ENCODE measurements at regions of chr19 and their contacts with region 1.

Region 1: GRCh38 chr19:17390665-17391370 is 3.2 kb downstream of the CCDC194 start:
- DNase-seq: peak; percentile 81 to 88 (median 86)
- H3K4me3 ChIP-seq: peak overlapping the region; percentile 64
- H3K4me3 Mint-ChIP-seq: peak overlapping the region; percentile 76 to 94 (median 89)
- H3K27ac ChIP-seq: no peak overlapping the region
- H3K27ac Mint-ChIP-seq: peak overlapping the region in 3 of 8 donors; percentile 48 to 86 (median 61)
- H3K4me1 ChIP-seq: peaks cover 20% of the 10 kb centered on the region
- H3K4me1 Mint-ChIP-seq: peaks cover 15 to 29% (median 20%) of the 10 kb centered on the region in 3 donors
- H3K27me3 ChIP-seq: no peaks in the 10 kb centered on the region
- H3K27me3 Mint-ChIP-seq: peaks cover 0 to 2% of the 10 kb centered on the region in 2 donors

Region 2: DNA sequence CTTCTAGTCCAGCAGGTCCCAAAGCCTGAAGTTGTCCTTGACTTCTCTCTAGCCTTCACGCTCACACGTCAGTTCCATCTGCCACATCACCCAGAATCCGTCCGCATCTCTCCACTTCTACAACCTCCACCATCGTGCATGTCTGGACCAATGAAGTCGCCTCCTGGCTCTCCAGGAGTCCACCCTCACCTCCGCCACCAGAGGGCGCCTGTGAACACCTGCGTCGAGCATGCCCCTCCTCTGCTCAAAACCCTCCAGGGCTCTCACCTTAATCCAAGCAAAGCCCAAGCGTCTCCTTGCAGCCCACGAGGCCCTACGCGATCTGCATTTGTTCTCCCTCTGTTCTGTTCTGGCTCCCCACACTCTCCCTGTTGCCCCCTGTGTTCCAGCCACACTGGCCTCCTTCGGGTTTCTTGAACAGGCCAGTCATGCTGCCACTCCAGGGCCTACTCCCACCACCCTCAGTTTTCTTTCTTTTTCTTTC is 129.9 kb before region 1 on chr19:
- CTCF ChIA-PET with region 1: interaction called, 10 read pairs
- POLR2A ChIA-PET with region 1: no interaction called
- DNase-seq: peak; percentile 80 to 92 (median 82)
- H3K4me3 ChIP-seq: no peak overlapping the region
- H3K4me3 Mint-ChIP-seq: no peak overlapping the region
- H3K27ac ChIP-seq: no peak overlapping the region
- H3K27ac Mint-ChIP-seq: peak overlapping the region in 4 of 8 donors; percentile 0 to 43 (median 3)
- H3K4me1 ChIP-seq: peaks cover 7% of the 10 kb centered on the region
- H3K4me1 Mint-ChIP-seq: peaks cover 7 to 13% (median 8%) of the 10 kb centered on the region in 3 donors
- H3K27me3 ChIP-seq: no peaks in the 10 kb centered on the region
- H3K27me3 Mint-ChIP-seq: no peaks in the 10 kb centered on the region

Region 3: DNA sequence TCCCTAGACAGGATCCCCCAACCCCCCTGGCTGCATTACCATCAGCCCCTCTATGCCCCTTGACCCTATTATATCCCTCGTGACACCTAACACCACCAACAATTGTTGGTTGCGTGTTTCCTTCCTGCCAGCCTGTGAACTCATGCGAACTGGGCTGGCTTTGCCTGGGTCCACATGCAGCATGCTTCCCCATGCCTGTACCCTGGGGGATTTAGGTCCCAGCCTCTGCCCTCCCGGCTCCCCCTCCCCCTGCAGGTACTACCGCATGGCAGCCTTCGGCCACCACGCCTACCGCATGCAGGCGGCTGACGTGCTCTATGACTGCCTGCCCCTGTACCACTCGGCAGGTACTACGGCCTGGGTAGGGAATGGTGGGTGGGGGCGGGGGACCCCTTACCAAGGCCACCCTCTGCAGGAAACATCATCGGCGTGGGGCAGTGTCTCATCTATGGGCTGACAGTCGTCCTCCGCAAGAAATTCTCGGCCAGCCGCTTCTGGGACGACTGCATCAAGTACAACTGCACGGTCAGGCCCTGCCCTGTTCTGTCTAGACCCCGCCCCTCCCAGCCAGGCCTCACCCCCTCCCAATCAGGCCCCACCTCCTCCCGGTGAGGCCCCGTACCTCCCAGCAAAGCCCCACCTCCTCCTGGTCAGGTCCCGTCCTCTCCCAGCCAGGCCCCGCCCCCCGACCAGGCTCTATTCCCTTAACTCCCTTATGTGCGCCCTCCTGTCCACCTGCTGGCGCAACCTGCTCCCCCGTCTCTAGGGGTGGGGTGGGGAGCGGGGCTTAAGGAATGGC is 98.0 kb after region 1 on chr19:
- CTCF ChIA-PET with region 1: no interaction called
- POLR2A ChIA-PET with region 1: no interaction called
- DNase-seq: peak; percentile 61 to 76 (median 68)
- H3K4me3 ChIP-seq: peak overlapping the region; percentile 62
- H3K4me3 Mint-ChIP-seq: peak overlapping the region; percentile 65 to 86 (median 74)
- H3K27ac ChIP-seq: peak overlapping the region; percentile 47
- H3K27ac Mint-ChIP-seq: peak overlapping the region; percentile 15 to 94 (median 87)
- H3K4me1 ChIP-seq: peaks cover 36% of the 10 kb centered on the region
- H3K4me1 Mint-ChIP-seq: peaks cover 34 to 36% (median 35%) of the 10 kb centered on the region in 3 donors
- H3K27me3 ChIP-seq: no peaks in the 10 kb centered on the region
- H3K27me3 Mint-ChIP-seq: peaks cover 0 to 2% of the 10 kb centered on the region in 2 donors

Measured in CD8-positive, alpha-beta memory T cell (primary cell).